HEK293 (cell line): ENCODE measurements at regions of chr21 and their contacts with region 1.

Region 1: DNA sequence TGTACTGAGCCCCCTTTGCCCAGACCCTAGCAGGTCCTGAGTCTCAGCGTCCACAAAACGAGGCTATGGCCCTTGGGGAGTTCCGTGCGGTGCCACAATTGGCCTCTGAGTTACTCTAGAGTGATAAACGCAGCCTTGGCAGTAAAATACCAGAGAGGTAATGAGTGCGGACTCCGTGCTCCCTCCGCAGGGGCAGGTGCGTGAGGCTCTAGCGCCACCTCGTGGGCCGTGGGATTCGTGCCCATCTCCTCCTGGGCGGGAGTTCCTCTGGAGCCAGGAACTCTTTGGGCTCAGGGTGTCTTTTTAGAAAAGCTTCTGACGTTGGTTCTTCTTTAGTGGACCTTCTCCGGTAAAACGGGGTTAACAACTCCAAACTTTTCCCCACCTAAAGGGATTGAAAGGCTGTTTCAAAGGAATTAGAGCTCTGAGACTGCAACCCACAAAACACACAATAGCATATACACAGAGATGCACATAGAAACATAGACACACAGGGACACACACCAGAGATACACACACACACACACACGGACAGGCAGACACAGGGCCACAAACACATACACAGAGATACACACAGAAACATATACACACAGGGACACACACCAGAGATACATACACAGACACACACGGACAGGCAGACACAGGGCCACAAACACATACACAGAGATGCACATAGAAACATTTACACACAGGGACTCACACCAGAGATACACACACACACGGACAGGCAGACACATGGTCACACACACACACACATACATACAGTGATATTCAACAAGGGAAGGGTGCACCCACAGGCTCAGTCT is 99.4 kb downstream of the KCNJ15 start:
- H3K4me3 ChIP-seq: no peak overlapping the region
- H3K27ac ChIP-seq: no peak overlapping the region
- H3K4me1 ChIP-seq: peaks cover 12% of the 10 kb centered on the region
- CTCF ChIP-seq: peak; percentile 96

Region 2: DNA sequence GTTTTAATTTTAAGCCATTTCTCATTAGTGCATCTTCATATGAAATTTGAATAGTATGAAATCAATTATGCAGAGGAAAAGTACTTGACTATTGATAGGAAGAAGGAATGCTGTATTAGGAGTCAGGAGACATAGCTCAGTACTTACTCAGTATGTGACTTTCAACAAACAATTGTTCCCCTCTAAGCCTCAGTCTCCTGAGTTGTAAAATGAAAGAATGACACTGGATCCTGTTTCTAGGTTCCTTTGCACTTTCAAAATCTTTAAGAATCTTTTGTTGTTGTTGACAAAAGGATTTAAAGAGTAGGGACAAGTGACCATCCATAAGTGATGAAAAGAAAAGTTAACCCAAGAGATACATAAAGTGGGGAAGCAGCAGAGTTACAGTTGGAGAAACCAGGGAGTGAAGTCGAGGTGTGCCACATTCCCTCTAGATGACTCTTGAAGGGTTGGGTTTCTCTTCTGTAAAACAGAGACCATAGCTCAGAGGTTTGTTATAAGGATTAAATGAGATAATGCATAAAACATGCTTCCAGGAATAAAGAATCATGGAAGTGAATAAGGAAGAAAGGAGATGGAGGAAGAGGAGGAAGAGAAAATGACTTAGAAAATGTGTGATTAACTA is 205.1 kb before region 1 on chr21:
- CTCF ChIA-PET with region 1: interaction called, 190 read pairs
- POLR2A ChIA-PET with region 1: no interaction called
- H3K4me3 ChIP-seq: no peak overlapping the region
- H3K27ac ChIP-seq: no peak overlapping the region
- H3K4me1 ChIP-seq: no peaks in the 10 kb centered on the region
- CTCF ChIP-seq: no peak

Region 3: DNA sequence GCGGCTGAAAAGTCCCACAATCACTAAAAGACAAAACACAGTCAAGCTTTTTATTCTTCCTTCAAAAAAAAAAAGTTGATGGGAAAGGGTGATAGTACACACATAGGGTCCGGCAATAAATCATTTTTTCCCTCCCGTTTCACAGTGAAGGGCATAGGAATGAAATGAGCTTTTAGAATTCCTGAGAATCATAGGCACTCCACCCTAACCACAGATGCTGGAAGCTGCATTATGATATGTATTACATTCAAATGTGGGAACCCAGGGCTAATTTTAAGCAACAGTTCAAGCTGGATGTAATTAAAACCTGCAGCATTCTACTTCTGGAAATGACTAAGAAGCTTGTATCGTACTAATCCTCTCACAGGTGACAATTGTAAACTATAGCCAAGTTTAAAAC is 175.1 kb before region 1 on chr21:
- CTCF ChIA-PET with region 1: interaction called, 378 read pairs
- POLR2A ChIA-PET with region 1: no interaction called
- H3K4me3 ChIP-seq: no peak overlapping the region
- H3K27ac ChIP-seq: no peak overlapping the region
- H3K4me1 ChIP-seq: no peaks in the 10 kb centered on the region
- CTCF ChIP-seq: no peak

Region 4: DNA sequence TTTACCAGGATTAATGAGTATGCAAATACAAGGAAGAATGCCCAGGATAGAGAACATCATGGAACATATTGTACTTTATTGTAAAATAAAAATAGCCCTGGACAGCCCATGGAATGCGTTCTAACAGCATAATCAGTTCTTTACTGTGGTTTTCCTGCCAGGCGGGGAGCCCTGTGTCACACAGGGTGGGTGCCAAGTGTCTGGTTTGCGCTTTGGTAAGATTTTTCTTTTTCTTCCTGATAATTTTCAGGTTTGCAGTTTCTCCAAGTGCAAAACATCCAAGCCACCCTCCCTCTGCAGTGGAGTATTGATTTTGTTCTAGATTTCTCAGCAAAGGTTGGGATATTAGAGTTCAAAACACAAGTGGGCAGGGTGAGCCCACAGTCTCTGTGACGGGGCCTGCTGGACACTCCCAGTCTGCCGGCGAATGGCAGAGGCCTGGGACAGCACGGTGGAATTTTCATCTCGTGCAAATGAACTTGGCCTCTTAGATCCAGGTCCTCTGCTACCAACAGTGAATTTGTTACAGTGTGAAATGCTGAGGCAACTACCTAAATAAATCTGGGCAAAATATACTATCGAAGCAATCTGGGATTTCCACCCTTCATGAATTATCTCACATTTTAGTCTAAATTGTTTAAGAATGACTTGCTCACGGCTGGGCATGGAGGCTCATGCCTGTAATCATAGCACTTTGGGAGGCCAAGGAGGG is 115.0 kb before region 1 on chr21:
- CTCF ChIA-PET with region 1: interaction called, 15 read pairs
- POLR2A ChIA-PET with region 1: no interaction called
- H3K4me3 ChIP-seq: no peak overlapping the region
- H3K27ac ChIP-seq: no peak overlapping the region
- H3K4me1 ChIP-seq: peaks cover 12% of the 10 kb centered on the region
- CTCF ChIP-seq: no peak

Region 5: DNA sequence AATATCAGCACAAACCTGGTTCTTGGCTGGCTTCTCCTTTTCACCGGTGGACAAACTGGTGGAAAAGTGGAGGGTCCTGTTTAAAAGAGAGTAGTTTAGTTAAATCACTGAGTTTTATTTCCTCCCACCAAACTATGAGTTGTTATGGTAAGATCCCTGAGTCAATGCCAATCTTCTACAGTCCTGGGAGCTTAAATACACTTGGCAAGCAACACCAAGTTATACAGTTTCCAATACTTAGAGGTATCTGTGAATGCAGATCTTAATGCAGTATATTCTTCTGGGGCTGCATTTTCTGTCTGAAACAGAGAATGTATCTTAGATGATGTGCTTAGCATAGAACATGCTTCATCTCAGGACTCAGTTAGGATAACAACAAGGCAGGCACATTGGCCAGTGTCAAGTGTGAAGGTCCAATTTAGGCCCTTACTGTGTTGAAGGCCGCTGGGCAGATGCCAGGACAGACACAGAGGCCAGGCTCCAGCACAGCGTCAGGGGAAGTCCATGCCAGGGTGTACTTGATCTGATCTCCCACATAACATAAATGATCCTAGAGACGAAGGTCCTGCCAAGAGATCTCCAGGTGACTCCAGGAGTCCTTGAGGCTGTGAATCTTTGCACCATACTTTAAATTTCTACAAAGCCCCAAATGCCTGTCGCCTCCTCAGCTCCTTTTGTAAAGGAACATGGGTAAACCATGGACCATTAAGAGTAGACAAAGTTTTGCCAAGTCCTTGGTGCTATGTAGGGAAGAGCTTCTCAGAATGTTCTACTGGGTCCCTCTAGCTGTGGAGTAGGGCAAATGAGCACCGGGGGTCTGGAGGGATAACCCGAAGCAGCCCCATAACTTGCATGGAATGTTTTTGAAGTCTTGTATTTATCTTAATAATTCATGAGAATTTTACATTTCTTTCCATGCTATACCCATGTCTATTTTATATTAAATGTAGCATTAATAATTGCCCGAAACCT is 22.6 kb before region 1 on chr21:
- CTCF ChIA-PET with region 1: interaction called, 17 read pairs
- POLR2A ChIA-PET with region 1: no interaction called
- H3K4me3 ChIP-seq: no peak overlapping the region
- H3K27ac ChIP-seq: no peak overlapping the region
- H3K4me1 ChIP-seq: no peaks in the 10 kb centered on the region
- CTCF ChIP-seq: no peak